Prostate gland (tissue), 2 donors: ENCODE measurements at regions of chr15 and their contacts with region 1.

Region 1: GRCh38 chr15:51649659-51650521 is 27.3 kb upstream of the DMXL2 start:
- DNase-seq: peak; percentile 64
- H3K4me3 ChIP-seq: no peak overlapping the region
- H3K27ac ChIP-seq: no peak overlapping the region
- H3K4me1 ChIP-seq: no peaks in the 10 kb centered on the region
- H3K27me3 ChIP-seq: no peaks in the 10 kb centered on the region
- CTCF ChIP-seq: peak; percentile 45 to 86 (median 80)
- POLR2A ChIP-seq: no peak

Region 2: GRCh38 chr15:51776952-51777574 is 127.2 kb after region 1 on chr15:
- intact Hi-C with region 1: loop called (anchors 2 kb)
- DNase-seq: peak; percentile 83
- H3K4me3 ChIP-seq: no peak overlapping the region
- H3K27ac ChIP-seq: no peak overlapping the region
- H3K4me1 ChIP-seq: no peaks in the 10 kb centered on the region
- H3K27me3 ChIP-seq: no peaks in the 10 kb centered on the region
- CTCF ChIP-seq: peak; percentile 45 to 76 (median 70)
- POLR2A ChIP-seq: no peak